Left colon (tissue), 2 donors: ENCODE measurements at regions of chr4 and their contacts with region 1.

Region 1: GRCh38 chr4:138035781-138036258 is 206.3 kb downstream of the SLC7A11 start:
- DNase-seq: peak in 1 of 2 donors; percentile 8
- ATAC-seq: peak; percentile 84

Region 2: GRCh38 chr4:138090150-138090917 is 54.5 kb after region 1 on chr4:
- intact Hi-C with region 1: loop called in 1 of 2 experiments (anchors 5 kb)
- DNase-seq: peak in 1 of 2 donors; percentile 22
- ATAC-seq: peak; percentile 71

Region 3: GRCh38 chr4:138182838-138183426 is 147.1 kb after region 1 on chr4:
- intact Hi-C with region 1: loop called in 1 of 2 experiments (anchors 10 kb)
- DNase-seq: no peak
- ATAC-seq: peak; percentile 57

Region 4: GRCh38 chr4:138680989-138681604 is 645.3 kb after region 1 on chr4:
- intact Hi-C with region 1: loop called in 1 of 2 experiments (anchors 5 kb)
- DNase-seq: peak; percentile 50 to 82
- ATAC-seq: peak; percentile 54

Region 5: GRCh38 chr4:138897811-138898226 is 862.0 kb after region 1 on chr4:
- intact Hi-C with region 1: no loop called
- DNase-seq: no peak
- ATAC-seq: no peak